ENCODE measurements at regions of chr12 and their contacts with region 1.

Region 1: DNA sequence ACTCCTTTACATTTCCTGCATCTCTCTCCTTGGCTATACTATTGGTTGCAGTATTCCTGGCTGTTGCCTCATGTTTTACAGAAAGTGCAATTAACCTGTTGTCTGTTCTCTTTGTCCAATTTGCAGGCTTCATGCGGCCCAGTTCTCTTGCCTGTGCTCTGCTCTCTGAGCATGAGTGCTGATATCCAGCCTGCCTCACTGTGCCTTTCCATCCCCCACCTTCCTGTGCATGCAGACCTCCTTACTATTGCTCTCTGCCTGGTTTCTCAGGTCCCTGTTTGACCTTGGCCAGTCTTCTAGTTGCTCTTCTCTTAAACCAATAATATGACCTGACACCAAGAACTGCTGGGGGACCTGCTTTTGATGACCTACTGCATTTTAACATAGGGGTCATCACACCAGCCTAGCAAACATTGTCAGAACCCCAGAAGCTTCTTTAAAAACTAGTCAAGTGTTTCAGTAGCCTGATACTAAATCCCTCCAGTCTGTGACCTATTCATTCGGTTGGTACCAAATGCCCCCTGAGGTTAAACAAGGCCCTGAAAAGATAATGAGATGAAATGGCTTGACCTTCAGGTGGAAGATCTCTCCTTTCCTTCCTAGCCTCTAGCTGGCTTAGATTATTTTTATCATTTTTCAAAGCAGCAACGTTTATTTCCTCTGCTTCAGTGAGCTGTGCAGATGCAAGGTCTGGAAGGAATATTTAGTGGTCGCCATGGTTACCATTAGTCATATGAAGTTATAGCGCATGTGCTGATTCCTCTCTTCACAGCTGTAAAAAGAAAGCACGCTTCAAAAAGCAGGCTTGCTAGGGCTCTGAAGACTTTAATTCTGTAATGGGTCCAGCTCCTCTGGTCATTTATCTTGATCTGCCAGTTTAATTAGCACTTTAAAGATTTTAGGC is 216.5 kb downstream of the PHLDA1 start:
- DNase-seq: peak; percentile 18 to 53
- H3K4me3 ChIP-seq: no peak overlapping the region
- H3K27ac ChIP-seq: no peak overlapping the region
- H3K4me1 ChIP-seq: peaks cover 10% of the 10 kb centered on the region
- H3K27me3 ChIP-seq: no peaks in the 10 kb centered on the region
- CTCF ChIP-seq: no peak

Region 2: GRCh38 chr12:75784591-75784990 is 30.5 kb before region 1 on chr12:
- CTCF ChIA-PET with region 1: no interaction called
- POLR2A ChIA-PET with region 1: no interaction called
- intact Hi-C with region 1: loop called (anchors 5 kb)
- DNase-seq: peak; percentile 83 to 84
- H3K4me3 ChIP-seq: no peak overlapping the region
- H3K27ac ChIP-seq: peak overlapping the region; percentile 21; the same call in 1 of the 2 replicates
- H3K4me1 ChIP-seq: peaks cover 40% of the 10 kb centered on the region
- H3K27me3 ChIP-seq: no peaks in the 10 kb centered on the region
- CTCF ChIP-seq: no peak

Region 3: GRCh38 chr12:75954041-75954440 is 138.9 kb after region 1 on chr12:
- CTCF ChIA-PET with region 1: no interaction called
- POLR2A ChIA-PET with region 1: no interaction called
- intact Hi-C with region 1: loop called (anchors 5 kb)
- DNase-seq: peak; percentile 57 to 99
- H3K4me3 ChIP-seq: peak overlapping the region; percentile 19; the same call in 1 of the 2 replicates
- H3K27ac ChIP-seq: peak overlapping the region; percentile 97
- H3K4me1 ChIP-seq: peaks cover 67% of the 10 kb centered on the region
- H3K27me3 ChIP-seq: no peaks in the 10 kb centered on the region
- CTCF ChIP-seq: no peak

Measured in PC-9 (cell line).